IMR-90 (cell line): ENCODE measurements at regions of chr1 and their contacts with region 1.

Region 1: DNA sequence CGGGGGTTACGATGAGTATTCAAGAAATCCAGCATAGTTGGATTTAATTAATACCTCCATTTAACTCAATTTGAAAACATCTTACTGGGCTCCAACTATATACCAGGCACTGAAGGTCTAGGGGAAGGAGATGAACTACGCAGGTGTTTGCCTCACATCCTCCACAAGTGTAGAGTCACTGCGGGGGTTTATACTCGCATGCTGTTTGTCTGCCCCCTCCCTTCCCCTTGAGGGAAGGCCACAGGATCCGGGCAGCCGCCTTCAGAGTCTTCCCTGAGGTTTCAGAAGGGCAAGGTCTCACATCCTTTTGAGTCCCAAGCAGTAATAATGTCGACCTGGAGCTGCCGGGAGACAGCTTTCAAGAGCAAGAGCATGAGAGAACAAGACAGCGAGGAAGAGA is 142.4 kb upstream of the GALNT2 start:
- DNase-seq: no peak
- ATAC-seq: no peak
- H3K4me3 ChIP-seq: no peak overlapping the region
- H3K27ac ChIP-seq: no peak overlapping the region
- H3K4me1 ChIP-seq: no peaks in the 10 kb centered on the region
- H3K27me3 ChIP-seq: no peaks in the 10 kb centered on the region
- CTCF ChIP-seq: no peak
- POLR2A ChIP-seq: no peak
- RAD21 ChIP-seq: no peak

Region 2: DNA sequence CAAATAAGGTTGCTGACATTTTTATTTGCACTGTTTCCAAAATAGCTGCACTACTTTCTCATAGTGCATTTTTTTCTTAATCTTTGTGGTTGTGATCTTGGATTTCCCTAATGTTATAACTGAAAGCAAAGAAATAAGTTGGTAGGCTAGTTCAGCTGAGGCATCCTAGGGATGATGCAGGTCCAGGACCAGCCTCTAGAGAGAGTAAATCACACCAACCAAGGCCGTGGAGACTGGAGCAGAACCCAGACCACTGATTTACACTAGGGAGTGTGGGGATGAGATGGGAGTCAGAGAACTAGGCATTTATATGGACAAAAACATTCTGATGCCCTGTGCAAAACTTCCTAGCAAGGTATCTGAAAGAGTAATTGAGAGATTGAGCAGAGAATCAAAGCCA is 194.1 kb before region 1 on chr1:
- CTCF ChIA-PET with region 1: no interaction called
- POLR2A ChIA-PET with region 1: no interaction called
- dilution Hi-C with region 1: no loop called
- in situ Hi-C with region 1: no loop called
- intact Hi-C with region 1: no loop called
- DNase-seq: no peak
- ATAC-seq: no peak
- H3K4me3 ChIP-seq: no peak overlapping the region
- H3K27ac ChIP-seq: no peak overlapping the region
- H3K4me1 ChIP-seq: no peaks in the 10 kb centered on the region
- H3K27me3 ChIP-seq: no peaks in the 10 kb centered on the region
- CTCF ChIP-seq: no peak
- POLR2A ChIP-seq: no peak
- RAD21 ChIP-seq: no peak

Region 3: DNA sequence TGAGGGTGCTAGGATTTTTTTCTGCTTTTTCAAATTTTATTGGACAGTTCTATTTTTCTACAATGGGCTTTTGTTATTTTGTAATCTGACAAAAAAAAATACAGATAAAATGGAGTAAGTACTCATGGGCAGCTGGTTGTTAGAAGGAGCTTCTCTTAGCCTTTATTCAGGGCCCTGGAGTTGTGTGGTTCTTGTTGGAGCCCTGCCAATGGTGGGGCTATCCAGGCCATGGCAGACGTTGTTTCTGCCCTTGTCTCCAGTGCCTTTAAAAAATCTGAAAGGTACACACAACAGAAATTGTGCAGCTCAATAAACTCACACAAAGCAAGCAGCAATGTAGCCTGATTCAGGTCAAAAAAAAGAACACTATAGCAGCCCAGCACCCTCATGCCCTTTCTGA is 11.2 kb before region 1 on chr1:
- CTCF ChIA-PET with region 1: no interaction called
- POLR2A ChIA-PET with region 1: interaction called, 15 read pairs
- dilution Hi-C with region 1: no loop called
- in situ Hi-C with region 1: no loop called
- intact Hi-C with region 1: no loop called
- DNase-seq: no peak
- ATAC-seq: no peak
- H3K4me3 ChIP-seq: no peak overlapping the region
- H3K27ac ChIP-seq: no peak overlapping the region
- H3K4me1 ChIP-seq: no peaks in the 10 kb centered on the region
- H3K27me3 ChIP-seq: no peaks in the 10 kb centered on the region; the same call in 1 of the 2 replicates
- CTCF ChIP-seq: no peak
- POLR2A ChIP-seq: no peak
- RAD21 ChIP-seq: no peak